Heart right ventricle (tissue), 16 donors: ENCODE measurements at regions of chr22 and their contacts with region 1.

Region 1: GRCh38 chr22:19488884-19489843 is 9.4 kb downstream of the CDC45 start:
- DNase-seq: no peak
- ATAC-seq: peak in 5 of 8 donors; percentile 31 to 81 (median 57)
- H3K4me3 ChIP-seq: no peak overlapping the region
- H3K27ac ChIP-seq: no peak overlapping the region
- H3K4me1 ChIP-seq: peaks cover 0 to 6% (median 0%) of the 10 kb centered on the region in 9 donors
- H3K27me3 ChIP-seq: no peaks in the 10 kb centered on the region
- CTCF ChIP-seq: peak in 4 of 9 donors; percentile 5 to 34 (median 24)

Region 2: GRCh38 chr22:19636661-19637410 is 147.7 kb after region 1 on chr22:
- intact Hi-C with region 1: loop called in 3 of 10 experiments (anchors 5 to 10 kb)
- DNase-seq: no peak
- ATAC-seq: no peak
- H3K4me3 ChIP-seq: no peak overlapping the region
- H3K27ac ChIP-seq: no peak overlapping the region
- H3K4me1 ChIP-seq: no peaks in the 10 kb centered on the region
- H3K27me3 ChIP-seq: peaks cover 0 to 15% (median 10%) of the 10 kb centered on the region in 7 donors
- CTCF ChIP-seq: no peak

Region 3: DNA sequence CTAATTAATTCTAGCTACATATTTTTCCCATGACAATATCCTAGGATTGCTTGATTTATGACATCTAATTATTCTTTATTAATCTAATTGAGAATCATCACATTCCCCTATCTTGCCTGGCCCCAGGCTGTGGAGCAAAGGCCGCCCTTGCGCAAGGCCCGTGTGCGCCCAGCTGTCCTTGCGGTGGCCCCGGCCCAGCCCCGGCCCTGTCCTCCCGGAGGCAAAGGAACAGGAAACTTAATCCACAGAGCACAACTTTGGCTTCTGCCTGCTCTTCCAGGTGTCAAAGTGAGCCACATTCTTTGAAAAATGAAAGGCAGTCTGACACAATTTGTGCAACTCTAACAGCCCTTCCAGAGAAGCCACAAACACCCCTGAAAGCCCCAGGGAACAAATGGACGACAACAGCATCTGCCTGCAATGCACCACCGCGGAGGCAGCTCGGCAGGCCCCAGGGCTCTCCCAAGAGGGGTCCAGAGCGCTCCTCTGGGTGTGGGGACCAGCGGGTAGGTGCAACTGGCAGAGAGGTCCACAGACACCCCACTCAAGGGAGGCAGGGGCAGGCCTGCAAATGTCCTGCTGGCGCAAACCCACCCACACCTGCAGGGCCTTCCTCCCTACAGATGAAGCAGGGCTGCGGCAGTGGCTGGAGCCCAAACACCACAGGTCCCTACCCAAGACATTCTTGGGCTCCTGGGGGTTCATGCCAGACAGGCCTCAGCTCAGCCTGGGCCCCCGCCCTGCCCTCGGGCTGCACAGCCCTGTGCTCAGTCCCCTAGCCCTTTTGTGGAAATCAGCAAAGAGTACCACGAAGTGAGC is 335.2 kb after region 1 on chr22:
- intact Hi-C with region 1: no loop called
- DNase-seq: no peak
- ATAC-seq: no peak
- H3K4me3 ChIP-seq: no peak overlapping the region
- H3K27ac ChIP-seq: no peak overlapping the region
- H3K4me1 ChIP-seq: no peaks in the 10 kb centered on the region
- H3K27me3 ChIP-seq: no peaks in the 10 kb centered on the region
- CTCF ChIP-seq: no peak